CD4-positive, alpha-beta memory T cell (primary cell): ENCODE measurements at regions of chr1 and their contacts with region 1.

Region 1: DNA sequence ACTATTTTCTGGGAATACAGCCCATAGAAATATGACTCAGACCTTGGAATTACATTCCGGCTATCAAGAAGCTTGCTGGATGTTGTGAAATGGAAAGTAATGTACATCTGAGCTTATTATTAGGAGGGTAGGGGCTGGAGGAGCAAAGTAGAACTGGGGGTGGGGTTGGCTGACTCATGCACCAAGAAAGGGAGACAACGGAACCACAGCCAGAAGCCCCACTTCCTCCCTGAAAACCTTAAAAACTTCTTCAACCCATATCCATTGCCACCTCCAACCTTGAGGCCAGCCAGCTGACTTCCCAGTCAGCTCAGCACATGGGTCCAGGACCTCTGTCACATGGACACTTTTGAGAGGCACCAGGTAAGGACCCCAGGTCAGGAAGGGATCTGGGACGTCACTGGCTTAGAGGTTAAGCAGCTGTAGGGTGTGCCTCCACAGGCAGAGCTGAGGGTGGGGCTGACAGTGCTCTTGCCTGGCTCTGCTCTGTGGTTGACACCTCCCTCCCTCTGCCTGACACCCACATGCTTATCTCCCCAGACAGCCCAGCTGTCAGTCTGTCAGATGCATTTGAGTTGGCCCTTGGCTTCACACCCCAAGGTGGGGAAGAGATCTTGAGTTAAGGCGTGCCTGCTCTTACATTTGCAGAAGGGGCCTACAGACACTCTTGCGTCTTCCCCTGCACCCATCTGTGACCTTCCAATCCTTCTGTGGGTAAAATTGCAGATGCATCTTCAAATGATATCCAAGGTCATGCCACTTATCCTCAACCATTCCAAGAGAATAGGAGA is 5.7 kb upstream of the ZNF683 start:
- DNase-seq: peak; percentile 86 to 95 (median 90)
- H3K4me3 ChIP-seq: peak overlapping the region in 1 of 2 donors; percentile 32
- H3K4me3 Mint-ChIP-seq: peak overlapping the region; percentile 55 to 87 (median 74)
- H3K27ac ChIP-seq: peak overlapping the region; percentile 53
- H3K27ac Mint-ChIP-seq: peak overlapping the region; percentile 84 to 99 (median 96)
- H3K4me1 ChIP-seq: peaks cover 82% of the 10 kb centered on the region
- H3K4me1 Mint-ChIP-seq: peaks cover 53 to 92% (median 69%) of the 10 kb centered on the region in 4 donors
- H3K27me3 ChIP-seq: no peaks in the 10 kb centered on the region
- H3K27me3 Mint-ChIP-seq: no peaks in the 10 kb centered on the region

Region 2: GRCh38 chr1:25556791-25557476 is 821.3 kb before region 1 on chr1:
- CTCF ChIA-PET with region 1: no interaction called
- POLR2A ChIA-PET with region 1: no interaction called
- intact Hi-C with region 1: no loop called
- DNase-seq: peak in 4 of 5 donors; percentile 57 to 63 (median 60)
- H3K4me3 ChIP-seq: no peak overlapping the region
- H3K4me3 Mint-ChIP-seq: peak overlapping the region; percentile 52 to 78 (median 66)
- H3K27ac ChIP-seq: peak overlapping the region; percentile 45
- H3K27ac Mint-ChIP-seq: peak overlapping the region; percentile 75 to 98 (median 95)
- H3K4me1 ChIP-seq: peaks cover 100% of the 10 kb centered on the region
- H3K4me1 Mint-ChIP-seq: peaks cover 69 to 100% (median 90%) of the 10 kb centered on the region in 4 donors
- H3K27me3 ChIP-seq: no peaks in the 10 kb centered on the region
- H3K27me3 Mint-ChIP-seq: no peaks in the 10 kb centered on the region

Region 3: DNA sequence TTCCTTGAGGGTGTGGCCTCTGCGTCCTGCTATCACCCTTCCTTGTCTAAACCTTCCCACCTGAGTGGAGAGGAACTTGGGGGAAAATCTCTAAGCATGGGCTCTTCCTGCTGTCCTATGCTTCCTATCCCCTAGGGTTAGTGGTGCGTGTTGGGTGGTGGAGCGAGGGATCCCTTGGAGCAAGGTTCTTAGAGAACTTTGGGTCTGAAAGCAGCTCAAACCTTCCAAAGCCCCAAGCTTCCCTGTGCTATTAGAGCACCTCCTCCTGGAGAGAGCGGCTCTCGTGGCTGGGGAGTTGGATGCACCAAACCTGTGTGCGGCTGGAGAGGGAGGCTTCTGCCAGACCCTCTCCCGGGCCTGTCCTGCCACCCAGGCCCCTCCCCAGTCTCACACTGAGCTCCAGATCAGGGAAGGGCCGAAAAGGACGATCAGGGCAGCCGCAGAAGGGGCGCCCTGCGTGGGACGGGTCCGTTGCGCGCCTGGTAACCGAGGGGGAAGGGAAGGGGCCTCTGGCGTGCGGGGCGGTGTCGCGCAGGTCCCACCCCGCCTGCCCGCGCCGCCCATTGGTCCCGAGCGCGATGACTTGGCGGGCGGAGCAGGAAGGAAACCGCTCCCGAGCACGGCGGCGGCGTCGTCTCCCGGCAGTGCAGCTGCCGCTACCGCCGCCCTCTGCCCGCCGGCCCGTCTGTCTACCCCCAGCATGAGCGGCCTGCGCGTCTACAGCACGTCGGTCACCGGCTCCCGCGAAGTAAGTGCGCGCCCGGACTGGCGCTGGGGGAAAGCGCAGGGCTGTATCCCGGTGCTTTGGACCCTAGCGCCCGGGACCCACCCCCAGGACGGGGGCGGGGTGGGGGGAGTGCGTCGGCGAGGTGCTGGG is 98.6 kb before region 1 on chr1 and contains the start of gene SH3BGRL3:
- CTCF ChIA-PET with region 1: interaction called, 33 read pairs
- POLR2A ChIA-PET with region 1: interaction called, 136 read pairs
- intact Hi-C with region 1: loop called (anchors 1 kb)
- DNase-seq: peak; percentile 83 to 88 (median 86)
- H3K4me3 ChIP-seq: peak within 1 kb of the TSS; percentile 50 to 92
- H3K4me3 Mint-ChIP-seq: peak within 1 kb of the TSS; percentile 85 to 96 (median 90)
- H3K27ac ChIP-seq: peak within 1 kb of the TSS; percentile 82
- H3K27ac Mint-ChIP-seq: peak within 1 kb of the TSS; percentile 94 to 98 (median 97)
- H3K4me1 ChIP-seq: peaks cover 88% of the 10 kb centered on the region
- H3K4me1 Mint-ChIP-seq: peaks cover 58 to 90% (median 76%) of the 10 kb centered on the region in 4 donors
- H3K27me3 ChIP-seq: no peaks in the 10 kb centered on the region
- H3K27me3 Mint-ChIP-seq: no peaks in the 10 kb centered on the region
- total RNA-seq, gene SH3BGRL3: 293 to 305 TPM

Region 4: GRCh38 chr1:26306290-26307229 is 71.7 kb before region 1 on chr1 and contains the start of gene UBXN11:
- CTCF ChIA-PET with region 1: interaction called, 4 read pairs
- POLR2A ChIA-PET with region 1: interaction called, 20 read pairs
- intact Hi-C with region 1: no loop called
- DNase-seq: peak; percentile 90 to 97 (median 91)
- H3K4me3 ChIP-seq: peak within 1 kb of the TSS; percentile 69 to 86
- H3K4me3 Mint-ChIP-seq: peak within 1 kb of the TSS; percentile 95 to 99 (median 98)
- H3K27ac ChIP-seq: peak within 1 kb of the TSS; percentile 74
- H3K27ac Mint-ChIP-seq: peak within 1 kb of the TSS; percentile 92 to 99 (median 98)
- H3K4me1 ChIP-seq: peaks cover 42% of the 10 kb centered on the region
- H3K4me1 Mint-ChIP-seq: peaks cover 25 to 40% (median 33%) of the 10 kb centered on the region in 4 donors
- H3K27me3 ChIP-seq: no peaks in the 10 kb centered on the region
- H3K27me3 Mint-ChIP-seq: no peaks in the 10 kb centered on the region
- total RNA-seq, gene UBXN11: 115 to 117 TPM

Region 5: GRCh38 chr1:26327956-26328362 is 50.3 kb before region 1 on chr1:
- CTCF ChIA-PET with region 1: interaction called, 23 read pairs
- POLR2A ChIA-PET with region 1: interaction called, 111 read pairs
- intact Hi-C with region 1: no loop called
- DNase-seq: no peak
- H3K4me3 ChIP-seq: no peak overlapping the region
- H3K4me3 Mint-ChIP-seq: no peak overlapping the region
- H3K27ac ChIP-seq: no peak overlapping the region
- H3K27ac Mint-ChIP-seq: peak overlapping the region in 2 of 7 donors; percentile 47 to 83
- H3K4me1 ChIP-seq: peaks cover 5% of the 10 kb centered on the region
- H3K4me1 Mint-ChIP-seq: peaks cover 5 to 15% (median 6%) of the 10 kb centered on the region in 4 donors
- H3K27me3 ChIP-seq: no peaks in the 10 kb centered on the region
- H3K27me3 Mint-ChIP-seq: no peaks in the 10 kb centered on the region

Region 6: DNA sequence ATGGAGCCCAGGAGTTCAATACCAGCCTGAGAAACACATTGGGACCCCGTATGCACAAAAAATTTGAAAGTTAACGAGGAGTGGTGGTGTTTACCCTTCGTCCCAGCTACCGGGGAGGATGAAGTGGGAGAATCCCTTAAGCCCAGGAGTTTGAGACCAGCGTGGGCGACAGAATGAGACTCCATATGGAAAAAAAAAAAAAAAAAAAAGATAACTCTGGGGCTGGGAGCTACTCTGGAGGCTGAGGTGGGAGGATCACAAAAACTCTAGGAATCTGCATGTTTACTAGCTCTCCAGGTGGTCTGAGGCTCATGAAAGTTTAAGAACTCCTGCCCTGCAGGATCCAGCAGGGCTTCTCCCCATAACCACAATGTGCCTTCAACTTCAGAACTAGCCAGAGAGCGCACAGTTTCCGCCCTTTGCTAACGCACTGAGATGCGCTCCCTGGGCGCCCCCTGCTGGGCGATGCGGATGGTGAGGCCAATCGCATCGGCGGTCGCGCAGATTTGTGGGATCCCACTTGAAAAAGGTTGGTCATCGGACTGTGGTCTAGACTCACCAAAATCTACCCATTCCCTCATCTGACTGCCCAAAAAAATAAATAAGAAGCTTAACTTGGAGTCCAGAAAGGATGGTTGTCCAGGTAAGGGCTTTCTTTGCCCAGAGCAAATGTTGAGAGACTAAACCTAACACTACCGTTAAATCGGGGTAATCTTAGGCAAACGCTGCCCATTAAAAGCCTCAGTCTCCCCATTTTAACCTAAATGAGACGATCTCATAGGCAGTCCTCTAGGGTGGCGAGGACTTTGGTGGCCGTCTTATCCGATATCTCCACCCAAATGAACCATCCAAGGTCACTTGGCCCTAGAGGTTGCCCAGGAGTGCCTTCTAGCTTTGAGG is 14.5 kb before region 1 on chr1:
- CTCF ChIA-PET with region 1: interaction called, 195 read pairs
- POLR2A ChIA-PET with region 1: interaction called, 174 read pairs
- intact Hi-C with region 1: loop called (anchors 1 kb)
- DNase-seq: peak; percentile 78 to 84 (median 79)
- H3K4me3 ChIP-seq: no peak overlapping the region
- H3K4me3 Mint-ChIP-seq: peak overlapping the region in 6 of 8 donors; percentile 54 to 82 (median 64)
- H3K27ac ChIP-seq: no peak overlapping the region
- H3K27ac Mint-ChIP-seq: peak overlapping the region in 6 of 7 donors; percentile 27 to 88 (median 70)
- H3K4me1 ChIP-seq: peaks cover 70% of the 10 kb centered on the region
- H3K4me1 Mint-ChIP-seq: peaks cover 31 to 81% (median 52%) of the 10 kb centered on the region in 4 donors
- H3K27me3 ChIP-seq: no peaks in the 10 kb centered on the region
- H3K27me3 Mint-ChIP-seq: no peaks in the 10 kb centered on the region

Region 7: GRCh38 chr1:26399034-26399433 is 20.8 kb after region 1 on chr1:
- CTCF ChIA-PET with region 1: interaction called, 15 read pairs
- POLR2A ChIA-PET with region 1: interaction called, 5 read pairs
- intact Hi-C with region 1: loop called (anchors 1 kb)
- DNase-seq: no peak
- H3K4me3 ChIP-seq: no peak overlapping the region
- H3K4me3 Mint-ChIP-seq: no peak overlapping the region
- H3K27ac ChIP-seq: no peak overlapping the region
- H3K27ac Mint-ChIP-seq: no peak overlapping the region
- H3K4me1 ChIP-seq: no peaks in the 10 kb centered on the region
- H3K4me1 Mint-ChIP-seq: peaks cover 3 to 6% (median 5%) of the 10 kb centered on the region in 4 donors
- H3K27me3 ChIP-seq: no peaks in the 10 kb centered on the region
- H3K27me3 Mint-ChIP-seq: peaks cover 8 to 9% of the 10 kb centered on the region in 2 donors

Region 8: DNA sequence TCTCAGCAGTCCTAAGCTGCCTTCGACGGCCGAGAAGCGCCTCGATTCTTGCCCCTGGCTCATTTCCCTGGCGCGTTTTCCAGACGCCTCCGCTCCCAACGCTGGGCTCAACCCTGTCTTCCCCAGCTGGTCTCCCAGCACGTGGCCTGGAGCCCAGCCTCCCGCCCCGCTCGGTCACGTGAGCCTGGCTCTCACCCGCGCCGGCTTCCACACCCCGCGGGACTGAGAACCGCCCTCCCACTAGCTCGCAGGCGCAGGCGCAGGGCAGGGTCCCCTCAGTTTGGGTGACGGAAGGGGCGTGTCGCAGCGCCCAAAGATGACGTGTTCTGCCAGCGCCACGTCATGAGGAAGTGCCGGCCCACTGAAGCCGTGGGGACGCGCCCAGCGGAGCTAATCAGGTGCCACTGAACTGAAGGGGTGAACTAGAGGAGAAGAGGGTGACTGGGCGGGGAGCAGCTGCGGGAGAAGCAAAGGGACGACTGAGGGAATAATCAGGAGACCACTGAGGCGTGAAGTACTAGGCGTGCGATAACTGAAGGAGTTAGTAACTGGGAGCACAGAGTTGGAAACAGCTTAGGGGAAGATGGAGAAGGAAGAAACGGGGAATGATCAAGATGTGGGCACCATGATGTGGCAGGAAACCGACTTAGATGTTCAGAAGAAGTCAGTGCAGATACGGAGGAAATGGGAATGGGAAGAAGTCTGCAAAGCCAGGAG is 53.9 kb after region 1 on chr1 and contains the start of gene DHDDS:
- CTCF ChIA-PET with region 1: no interaction called
- POLR2A ChIA-PET with region 1: interaction called, 13 read pairs
- intact Hi-C with region 1: no loop called
- DNase-seq: peak; percentile 97 to 99 (median 97)
- H3K4me3 ChIP-seq: peak within 1 kb of the TSS; percentile 85 to 88
- H3K4me3 Mint-ChIP-seq: peak within 1 kb of the TSS; percentile 89 to 98 (median 94)
- H3K27ac ChIP-seq: peak within 1 kb of the TSS; percentile 69
- H3K27ac Mint-ChIP-seq: peak within 1 kb of the TSS; percentile 71 to 98 (median 97)
- H3K4me1 ChIP-seq: peaks cover 28% of the 10 kb centered on the region
- H3K4me1 Mint-ChIP-seq: peaks cover 10 to 25% (median 17%) of the 10 kb centered on the region in 4 donors
- H3K27me3 ChIP-seq: no peaks in the 10 kb centered on the region
- H3K27me3 Mint-ChIP-seq: peaks cover 2 to 4% of the 10 kb centered on the region in 2 donors
- total RNA-seq, gene DHDDS: 44.4 to 46.2 TPM

Region 9: DNA sequence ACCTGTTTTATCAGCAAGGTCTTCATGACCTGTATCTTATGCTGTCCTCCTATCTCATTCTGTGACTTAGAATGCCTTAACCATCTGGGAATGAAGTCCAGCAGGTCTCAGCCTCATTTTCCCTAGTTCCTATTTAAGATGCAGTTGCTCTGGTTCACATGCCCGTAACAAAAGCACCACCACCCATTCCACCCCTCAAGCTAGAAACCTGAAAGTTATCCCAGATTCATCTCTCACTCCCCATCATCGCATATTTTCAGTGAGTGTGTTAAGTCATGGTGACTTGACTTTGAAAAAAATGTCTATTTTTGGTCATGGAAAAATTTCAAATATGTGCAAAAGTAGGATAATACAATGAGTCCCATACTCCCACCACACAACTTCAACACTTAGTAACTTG is 105.7 kb after region 1 on chr1:
- CTCF ChIA-PET with region 1: no interaction called
- POLR2A ChIA-PET with region 1: no interaction called
- intact Hi-C with region 1: no loop called
- DNase-seq: no peak
- H3K4me3 ChIP-seq: no peak overlapping the region
- H3K4me3 Mint-ChIP-seq: no peak overlapping the region
- H3K27ac ChIP-seq: no peak overlapping the region
- H3K27ac Mint-ChIP-seq: peak overlapping the region in 4 of 7 donors; percentile 5 to 83 (median 42)
- H3K4me1 ChIP-seq: no peaks in the 10 kb centered on the region
- H3K4me1 Mint-ChIP-seq: peaks cover 1 to 8% (median 3%) of the 10 kb centered on the region in 4 donors
- H3K27me3 ChIP-seq: no peaks in the 10 kb centered on the region
- H3K27me3 Mint-ChIP-seq: no peaks in the 10 kb centered on the region